ENCODE measurements at regions of chr18 and their contacts with region 1.

Region 1: GRCh38 chr18:23967321-23968089 is 47.0 kb upstream of the TTC39C start:
- DNase-seq: peak; percentile 61
- H3K4me3 Mint-ChIP-seq: no peak overlapping the region
- H3K27ac Mint-ChIP-seq: peak overlapping the region; percentile 2
- H3K4me1 Mint-ChIP-seq: peaks cover 66% of the 10 kb centered on the region
- H3K27me3 Mint-ChIP-seq: peaks cover 12% of the 10 kb centered on the region

Region 2: DNA sequence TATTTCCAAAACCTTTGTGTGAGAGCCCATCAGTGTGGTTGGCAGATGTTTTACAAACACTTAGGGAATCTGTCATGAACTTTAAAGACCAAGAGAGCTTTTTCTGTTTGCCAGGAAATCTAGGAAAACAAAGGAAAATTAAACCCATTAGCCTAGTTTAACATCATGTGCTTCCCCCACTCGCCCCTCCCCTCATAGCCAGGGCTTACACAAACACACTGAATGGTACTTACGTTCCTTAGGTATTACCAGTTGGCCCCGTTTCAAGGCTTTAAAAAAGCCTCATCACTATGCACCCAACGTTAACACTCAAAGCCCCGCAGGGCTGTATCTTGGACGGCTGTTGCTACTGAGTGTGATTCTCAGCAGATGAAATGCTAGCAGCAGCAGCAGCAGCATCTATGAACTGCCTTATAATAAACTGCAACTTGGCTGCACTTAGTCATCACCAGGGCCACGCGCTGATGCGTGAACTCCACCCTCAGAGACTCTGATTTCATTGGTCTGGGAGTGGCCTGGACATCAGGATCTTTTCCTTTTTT is 26.9 kb after region 1 on chr18:
- CTCF ChIA-PET with region 1: no interaction called
- POLR2A ChIA-PET with region 1: interaction called, 32 read pairs
- DNase-seq: no peak
- H3K4me3 Mint-ChIP-seq: peak overlapping the region; percentile 59
- H3K27ac Mint-ChIP-seq: peak overlapping the region; percentile 64
- H3K4me1 Mint-ChIP-seq: peaks cover 65% of the 10 kb centered on the region
- H3K27me3 Mint-ChIP-seq: peaks cover 2% of the 10 kb centered on the region

Region 3: GRCh38 chr18:24000613-24001490 is 33.3 kb after region 1 on chr18:
- CTCF ChIA-PET with region 1: no interaction called
- POLR2A ChIA-PET with region 1: interaction called, 32 read pairs
- DNase-seq: no peak
- H3K4me3 Mint-ChIP-seq: peak overlapping the region; percentile 51
- H3K27ac Mint-ChIP-seq: peak overlapping the region; percentile 85
- H3K4me1 Mint-ChIP-seq: peaks cover 66% of the 10 kb centered on the region
- H3K27me3 Mint-ChIP-seq: no peaks in the 10 kb centered on the region

Region 4: GRCh38 chr18:24094561-24094960 is 127.1 kb after region 1 on chr18:
- CTCF ChIA-PET with region 1: no interaction called
- POLR2A ChIA-PET with region 1: no interaction called
- DNase-seq: no peak
- H3K4me3 Mint-ChIP-seq: no peak overlapping the region
- H3K27ac Mint-ChIP-seq: no peak overlapping the region
- H3K4me1 Mint-ChIP-seq: peaks cover 17% of the 10 kb centered on the region
- H3K27me3 Mint-ChIP-seq: no peaks in the 10 kb centered on the region